Activated CD8-positive, alpha-beta T cell treated with anti-CD3 and anti-CD28 coated beads for 36 hours (primary cell): ENCODE measurements at regions of chr1 and their contacts with region 1.

Region 1: DNA sequence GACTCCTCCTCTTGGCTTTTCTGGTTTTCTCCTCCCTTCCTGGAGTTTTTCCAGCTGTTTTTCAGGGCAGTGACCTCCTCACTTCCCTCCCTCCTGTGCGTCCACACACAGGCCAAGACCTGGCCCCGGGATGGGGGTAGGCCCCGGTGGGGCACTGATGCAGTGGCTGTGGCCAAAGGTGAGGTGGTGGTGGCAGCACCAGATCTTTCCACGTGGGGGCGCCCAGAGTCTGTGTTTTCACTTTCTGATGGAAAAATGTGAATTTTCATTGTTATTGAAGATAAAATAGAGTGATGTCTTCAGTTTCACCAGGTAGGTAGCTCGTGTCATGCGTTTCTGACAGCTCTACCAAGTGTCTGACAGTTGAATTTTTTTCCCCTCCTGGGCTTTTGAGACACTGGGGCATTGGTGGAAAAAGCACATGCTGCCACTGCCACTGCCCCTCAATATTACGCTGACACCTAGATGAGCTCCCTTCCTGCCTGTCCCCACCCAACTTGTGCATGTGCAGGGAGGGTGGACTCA is 39.9 kb upstream of the MAGOH start:
- DNase-seq: peak; percentile 79
- ATAC-seq: peak; percentile 84
- H3K4me3 Mint-ChIP-seq: no peak overlapping the region
- H3K27ac Mint-ChIP-seq: peak overlapping the region; percentile 52
- H3K4me1 Mint-ChIP-seq: no peaks in the 10 kb centered on the region
- H3K27me3 Mint-ChIP-seq: no peaks in the 10 kb centered on the region
- CTCF ChIP-seq: peak; percentile 93

Region 2: GRCh38 chr1:53165408-53165961 is 112.8 kb before region 1 on chr1:
- CTCF ChIA-PET with region 1: no interaction called
- POLR2A ChIA-PET with region 1: no interaction called
- intact Hi-C with region 1: no loop called
- DNase-seq: no peak
- ATAC-seq: no peak
- H3K4me3 Mint-ChIP-seq: no peak overlapping the region
- H3K27ac Mint-ChIP-seq: no peak overlapping the region
- H3K4me1 Mint-ChIP-seq: no peaks in the 10 kb centered on the region
- H3K27me3 Mint-ChIP-seq: peaks cover 4% of the 10 kb centered on the region
- CTCF ChIP-seq: no peak

Region 3: DNA sequence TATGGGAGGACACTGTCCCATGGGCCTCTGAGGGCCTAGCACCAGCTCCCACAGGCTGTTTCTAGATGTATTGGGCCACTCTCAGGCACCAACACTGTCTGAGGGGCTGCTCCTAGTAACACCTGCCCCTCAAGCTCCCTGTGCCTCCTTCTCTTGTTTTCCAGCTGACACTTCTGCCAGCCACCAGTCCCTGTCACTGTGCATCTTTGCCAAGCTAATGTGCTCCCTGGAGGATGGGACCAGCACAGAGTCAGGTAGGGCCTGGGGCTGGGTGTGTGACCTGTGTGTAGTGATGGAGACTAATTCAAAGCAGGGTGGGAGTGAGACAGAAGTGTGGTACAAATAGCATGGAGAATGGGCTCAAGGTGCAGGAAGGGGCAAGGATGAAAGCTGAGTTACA is 10.5 kb before region 1 on chr1:
- CTCF ChIA-PET with region 1: interaction called, 11 read pairs
- POLR2A ChIA-PET with region 1: interaction called, 3 read pairs
- intact Hi-C with region 1: no loop called
- DNase-seq: no peak
- ATAC-seq: no peak
- H3K4me3 Mint-ChIP-seq: no peak overlapping the region
- H3K27ac Mint-ChIP-seq: no peak overlapping the region
- H3K4me1 Mint-ChIP-seq: no peaks in the 10 kb centered on the region
- H3K27me3 Mint-ChIP-seq: no peaks in the 10 kb centered on the region
- CTCF ChIP-seq: no peak

Region 4: DNA sequence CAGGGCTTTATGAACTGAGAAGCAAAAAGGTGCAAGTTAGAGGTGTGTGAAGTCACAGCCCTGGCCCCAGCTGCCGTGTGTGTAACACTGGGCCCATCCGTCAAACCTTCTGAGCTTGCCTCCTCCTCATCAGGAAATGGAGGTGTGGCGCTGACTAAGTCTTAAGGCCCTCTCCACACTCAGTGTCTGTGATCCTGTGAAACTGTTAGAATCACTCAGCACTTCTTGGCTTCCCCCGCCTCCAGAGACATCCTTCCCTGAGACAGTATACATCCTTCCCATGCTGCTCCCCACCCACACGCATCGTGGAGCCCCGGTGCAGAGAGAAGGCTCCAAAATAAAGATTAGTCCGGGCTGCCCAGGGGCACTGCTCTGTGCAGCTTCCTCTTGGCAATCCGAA is 16.3 kb after region 1 on chr1:
- CTCF ChIA-PET with region 1: interaction called, 34 read pairs
- POLR2A ChIA-PET with region 1: interaction called, 3 read pairs
- intact Hi-C with region 1: no loop called
- DNase-seq: peak; percentile 62
- ATAC-seq: peak; percentile 84
- H3K4me3 Mint-ChIP-seq: no peak overlapping the region
- H3K27ac Mint-ChIP-seq: no peak overlapping the region
- H3K4me1 Mint-ChIP-seq: peaks cover 33% of the 10 kb centered on the region
- H3K27me3 Mint-ChIP-seq: no peaks in the 10 kb centered on the region
- CTCF ChIP-seq: no peak

Region 5: GRCh38 chr1:53326088-53326597 is 47.9 kb after region 1 on chr1:
- CTCF ChIA-PET with region 1: interaction called, 11 read pairs
- POLR2A ChIA-PET with region 1: interaction called, 3 read pairs
- intact Hi-C with region 1: no loop called
- DNase-seq: peak; percentile 98
- ATAC-seq: peak; percentile 87
- H3K4me3 Mint-ChIP-seq: peak overlapping the region; percentile 97
- H3K27ac Mint-ChIP-seq: peak overlapping the region; percentile 97
- H3K4me1 Mint-ChIP-seq: peaks cover 19% of the 10 kb centered on the region
- H3K27me3 Mint-ChIP-seq: no peaks in the 10 kb centered on the region
- CTCF ChIP-seq: no peak

Region 6: GRCh38 chr1:53393325-53393792 is 115.1 kb after region 1 on chr1:
- CTCF ChIA-PET with region 1: interaction called, 111 read pairs
- POLR2A ChIA-PET with region 1: no interaction called
- intact Hi-C with region 1: loop called (anchors 2 kb)
- DNase-seq: peak; percentile 74
- ATAC-seq: peak; percentile 92
- H3K4me3 Mint-ChIP-seq: no peak overlapping the region
- H3K27ac Mint-ChIP-seq: no peak overlapping the region
- H3K4me1 Mint-ChIP-seq: no peaks in the 10 kb centered on the region
- H3K27me3 Mint-ChIP-seq: no peaks in the 10 kb centered on the region
- CTCF ChIP-seq: peak; percentile 95

Region 7: DNA sequence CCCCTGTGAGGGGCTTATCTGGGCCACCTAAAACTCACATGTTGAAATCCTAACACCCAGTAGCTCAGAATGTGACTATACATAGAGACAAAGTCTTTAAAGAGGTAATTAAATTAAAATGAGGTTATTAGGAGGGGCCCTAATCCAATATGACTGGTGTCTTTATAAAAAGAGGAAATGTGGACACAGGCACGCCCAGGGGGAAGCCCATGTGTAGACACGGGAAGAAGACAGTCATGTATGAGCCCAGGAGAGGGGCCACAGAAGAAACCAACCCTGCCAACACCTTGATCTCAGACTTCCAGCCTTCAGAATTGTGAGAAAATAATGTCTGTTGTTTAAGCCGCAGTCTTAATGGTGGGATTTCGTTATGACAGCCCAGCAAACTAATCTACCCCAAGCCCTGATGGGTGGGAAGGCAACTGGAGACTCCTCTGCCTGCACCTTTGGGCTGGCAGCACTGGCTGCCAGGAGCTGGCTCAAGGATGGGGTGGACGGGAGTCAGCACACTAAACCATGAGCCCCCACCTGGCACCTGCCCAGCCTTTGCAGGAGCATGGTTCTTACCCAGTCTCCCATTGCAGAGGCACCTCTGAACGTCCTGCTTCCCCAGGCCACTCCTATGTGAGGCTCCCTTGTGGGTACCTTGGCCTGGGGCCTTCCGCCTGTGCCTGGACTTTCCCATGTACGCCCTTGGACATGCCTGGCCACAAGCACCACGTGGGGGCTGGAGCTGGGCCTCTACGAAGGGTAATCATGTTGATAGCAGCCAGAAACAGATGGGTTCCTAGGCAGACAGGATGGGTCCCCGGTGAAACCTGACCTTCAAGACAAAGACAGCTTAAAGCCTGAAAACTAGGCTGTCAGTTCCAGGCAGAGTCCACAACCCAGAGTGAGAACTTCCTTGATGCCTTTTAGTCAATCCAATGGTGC is 123.8 kb after region 1 on chr1:
- CTCF ChIA-PET with region 1: interaction called, 111 read pairs
- POLR2A ChIA-PET with region 1: no interaction called
- intact Hi-C with region 1: no loop called
- DNase-seq: no peak
- ATAC-seq: no peak
- H3K4me3 Mint-ChIP-seq: no peak overlapping the region
- H3K27ac Mint-ChIP-seq: no peak overlapping the region
- H3K4me1 Mint-ChIP-seq: no peaks in the 10 kb centered on the region
- H3K27me3 Mint-ChIP-seq: no peaks in the 10 kb centered on the region
- CTCF ChIP-seq: no peak